Activated CD4-positive, alpha-beta T cell treated with anti-CD3 and anti-CD28 coated beads for 36 hours (primary cell): ENCODE measurements at regions of chr2 and their contacts with region 1.

Region 1: GRCh38 chr2:206392118-206392517 is 51.2 kb upstream of the ADAM23 start:
- DNase-seq: peak; percentile 58
- ATAC-seq: peak; percentile 58
- H3K4me3 Mint-ChIP-seq: no peak overlapping the region
- H3K27ac Mint-ChIP-seq: no peak overlapping the region
- H3K4me1 Mint-ChIP-seq: no peaks in the 10 kb centered on the region
- H3K27me3 Mint-ChIP-seq: no peaks in the 10 kb centered on the region

Region 2: DNA sequence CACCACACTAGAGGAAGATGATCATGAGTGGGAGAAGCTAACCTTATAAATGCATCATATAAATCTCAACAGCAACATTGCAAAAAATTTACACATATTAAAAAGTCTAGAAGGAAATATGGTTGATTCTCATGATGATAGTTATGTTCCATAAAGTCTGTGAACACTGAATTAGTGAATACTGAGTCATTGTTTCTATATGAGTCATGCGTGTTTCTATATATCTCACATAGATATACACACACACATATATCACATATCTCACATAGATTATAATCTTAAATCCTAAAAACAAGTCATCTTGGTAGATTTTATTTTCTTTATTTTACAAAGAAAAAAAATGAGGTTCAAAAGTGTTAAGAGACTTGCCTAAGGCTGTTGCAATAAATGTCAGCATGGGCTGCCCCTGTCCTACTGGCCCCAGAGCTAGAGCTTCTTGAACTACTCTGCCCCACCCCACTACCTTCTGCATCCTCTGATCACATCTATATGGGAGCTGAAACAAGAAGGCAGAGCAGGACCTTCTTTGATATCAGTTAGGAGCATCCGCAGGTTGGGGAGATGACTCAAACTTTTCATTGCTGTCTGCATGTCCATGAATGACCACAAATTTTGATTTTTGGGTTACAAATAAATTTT is 30.6 kb before region 1 on chr2:
- CTCF ChIA-PET with region 1: no interaction called
- POLR2A ChIA-PET with region 1: no interaction called
- intact Hi-C with region 1: no loop called
- DNase-seq: peak; percentile 44
- ATAC-seq: peak; percentile 93
- H3K4me3 Mint-ChIP-seq: no peak overlapping the region
- H3K27ac Mint-ChIP-seq: no peak overlapping the region
- H3K4me1 Mint-ChIP-seq: peaks cover 10% of the 10 kb centered on the region
- H3K27me3 Mint-ChIP-seq: peaks cover 7% of the 10 kb centered on the region

Region 3: GRCh38 chr2:206756816-206757215 is 364.7 kb after region 1 on chr2:
- CTCF ChIA-PET with region 1: no interaction called
- POLR2A ChIA-PET with region 1: no interaction called
- intact Hi-C with region 1: no loop called
- DNase-seq: no peak
- ATAC-seq: no peak
- H3K4me3 Mint-ChIP-seq: no peak overlapping the region
- H3K27ac Mint-ChIP-seq: no peak overlapping the region
- H3K4me1 Mint-ChIP-seq: no peaks in the 10 kb centered on the region
- H3K27me3 Mint-ChIP-seq: peaks cover 29% of the 10 kb centered on the region

Region 4: GRCh38 chr2:206783718-206784117 is 391.6 kb after region 1 on chr2:
- CTCF ChIA-PET with region 1: interaction called, 3 read pairs
- POLR2A ChIA-PET with region 1: no interaction called
- intact Hi-C with region 1: loop called in 1 of 2 experiments (anchors 1 kb)
- DNase-seq: no peak
- ATAC-seq: no peak
- H3K4me3 Mint-ChIP-seq: no peak overlapping the region
- H3K27ac Mint-ChIP-seq: no peak overlapping the region
- H3K4me1 Mint-ChIP-seq: peaks cover 30% of the 10 kb centered on the region
- H3K27me3 Mint-ChIP-seq: no peaks in the 10 kb centered on the region